Activated CD8-positive, alpha-beta memory T cell treated with anti-CD3 and anti-CD28 coated beads, Interleukin-2, amount 10 ng/mL, durations not matched to agents 7 days and 5 days (primary cell): ENCODE measurements at regions of chr6 and their contacts with region 1.

Region 1: GRCh38 chr6:158972241-158973233 is 27.5 kb downstream of the RSPH3 start:
- DNase-seq: no peak
- ATAC-seq: peak; percentile 55
- H3K4me3 Mint-ChIP-seq: no peak overlapping the region
- H3K27ac Mint-ChIP-seq: no peak overlapping the region
- H3K4me1 Mint-ChIP-seq: no peaks in the 10 kb centered on the region
- H3K27me3 Mint-ChIP-seq: no peaks in the 10 kb centered on the region

Region 2: GRCh38 chr6:158704181-158704822 is 268.2 kb before region 1 on chr6:
- CTCF ChIA-PET with region 1: interaction called, 14 read pairs
- DNase-seq: peak; percentile 81
- ATAC-seq: peak; percentile 98
- H3K4me3 Mint-ChIP-seq: peak overlapping the region; percentile 45
- H3K27ac Mint-ChIP-seq: peak overlapping the region; percentile 80
- H3K4me1 Mint-ChIP-seq: peaks cover 25% of the 10 kb centered on the region
- H3K27me3 Mint-ChIP-seq: no peaks in the 10 kb centered on the region

Region 3: GRCh38 chr6:158793432-158793831 is 179.1 kb before region 1 on chr6:
- CTCF ChIA-PET with region 1: interaction called, 37 read pairs
- DNase-seq: no peak
- ATAC-seq: peak; percentile 56
- H3K4me3 Mint-ChIP-seq: no peak overlapping the region
- H3K27ac Mint-ChIP-seq: peak overlapping the region; percentile 32
- H3K4me1 Mint-ChIP-seq: peaks cover 84% of the 10 kb centered on the region
- H3K27me3 Mint-ChIP-seq: no peaks in the 10 kb centered on the region